OCI-LY7 (cell line): ENCODE measurements at regions of chr18 and their contacts with region 1.

Region 1: GRCh38 chr18:23967321-23968089 is 47.0 kb upstream of the TTC39C start:
- DNase-seq: peak; percentile 59
- H3K4me3 ChIP-seq: no peak overlapping the region
- H3K27ac ChIP-seq: no peak overlapping the region
- H3K4me1 ChIP-seq: peaks cover 27% of the 10 kb centered on the region
- CTCF ChIP-seq: no peak

Region 2: GRCh38 chr18:23852208-23853045 is 115.1 kb before region 1 on chr18:
- CTCF ChIA-PET with region 1: no interaction called
- POLR2A ChIA-PET with region 1: no interaction called
- intact Hi-C with region 1: no loop called
- DNase-seq: peak; percentile 69
- H3K4me3 ChIP-seq: peak overlapping the region; percentile 18
- H3K27ac ChIP-seq: peak overlapping the region; percentile 50
- H3K4me1 ChIP-seq: peaks cover 25% of the 10 kb centered on the region
- CTCF ChIP-seq: no peak

Region 3: GRCh38 chr18:23998018-23998417 is 30.5 kb after region 1 on chr18:
- CTCF ChIA-PET with region 1: no interaction called
- POLR2A ChIA-PET with region 1: interaction called, 11 read pairs
- intact Hi-C with region 1: no loop called
- DNase-seq: no peak
- H3K4me3 ChIP-seq: no peak overlapping the region
- H3K27ac ChIP-seq: no peak overlapping the region
- H3K4me1 ChIP-seq: peaks cover 7% of the 10 kb centered on the region
- CTCF ChIP-seq: no peak

Region 4: GRCh38 chr18:24219561-24220317 is 252.2 kb after region 1 on chr18:
- CTCF ChIA-PET with region 1: no interaction called
- POLR2A ChIA-PET with region 1: no interaction called
- intact Hi-C with region 1: no loop called
- DNase-seq: no peak
- H3K4me3 ChIP-seq: no peak overlapping the region
- H3K27ac ChIP-seq: no peak overlapping the region
- H3K4me1 ChIP-seq: no peaks in the 10 kb centered on the region
- CTCF ChIP-seq: no peak